GM10248 (cell line): ENCODE measurements at regions of chr10 and their contacts with region 1.

Region 1: DNA sequence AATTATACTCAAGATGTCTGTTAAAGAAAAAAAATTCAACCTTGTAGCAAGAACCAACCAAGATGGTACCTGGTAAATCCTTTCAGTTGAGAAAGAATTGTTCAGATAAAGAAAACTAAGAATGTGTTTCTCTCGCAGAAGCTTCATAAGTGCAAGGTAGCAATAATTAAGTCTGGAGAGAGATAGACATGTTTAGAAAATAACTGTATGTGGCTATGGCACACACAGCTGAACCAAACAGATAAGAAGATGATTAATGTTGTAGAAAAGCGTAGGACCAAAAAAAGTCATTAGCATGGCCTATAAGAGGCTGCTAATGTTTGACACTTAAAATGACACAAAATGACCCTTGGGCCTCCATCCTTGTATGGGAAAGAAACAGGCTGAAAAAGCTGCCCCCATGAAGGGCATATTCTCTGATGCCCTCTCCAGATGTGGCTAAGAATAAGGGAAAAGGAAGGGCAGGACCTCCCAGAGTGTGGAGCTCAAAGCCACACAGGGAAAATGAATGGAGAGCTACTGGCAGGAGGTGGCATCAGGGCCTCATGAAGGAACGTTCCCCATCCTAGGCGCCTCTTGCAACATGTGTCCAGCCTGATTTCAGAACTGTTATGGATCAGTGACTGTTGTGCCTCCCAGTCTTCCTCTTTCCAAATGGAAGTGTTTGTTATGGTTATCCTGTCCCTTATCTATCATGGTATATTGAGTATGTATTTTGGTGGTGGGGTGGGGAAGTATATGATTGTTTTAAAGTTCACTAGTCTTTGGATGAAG is 30.7 kb downstream of the TLL2 start:
- DNase-seq: no peak
- CTCF ChIP-seq: no peak

Region 2: GRCh38 chr10:96470116-96470743 is 12.8 kb before region 1 on chr10:
- CTCF ChIA-PET with region 1: interaction called, 15 read pairs
- POLR2A ChIA-PET with region 1: interaction called, 4 read pairs
- DNase-seq: peak; percentile 69
- CTCF ChIP-seq: peak; percentile 62